ENCODE measurements at regions of chr19 and their contacts with region 1.

Region 1: DNA sequence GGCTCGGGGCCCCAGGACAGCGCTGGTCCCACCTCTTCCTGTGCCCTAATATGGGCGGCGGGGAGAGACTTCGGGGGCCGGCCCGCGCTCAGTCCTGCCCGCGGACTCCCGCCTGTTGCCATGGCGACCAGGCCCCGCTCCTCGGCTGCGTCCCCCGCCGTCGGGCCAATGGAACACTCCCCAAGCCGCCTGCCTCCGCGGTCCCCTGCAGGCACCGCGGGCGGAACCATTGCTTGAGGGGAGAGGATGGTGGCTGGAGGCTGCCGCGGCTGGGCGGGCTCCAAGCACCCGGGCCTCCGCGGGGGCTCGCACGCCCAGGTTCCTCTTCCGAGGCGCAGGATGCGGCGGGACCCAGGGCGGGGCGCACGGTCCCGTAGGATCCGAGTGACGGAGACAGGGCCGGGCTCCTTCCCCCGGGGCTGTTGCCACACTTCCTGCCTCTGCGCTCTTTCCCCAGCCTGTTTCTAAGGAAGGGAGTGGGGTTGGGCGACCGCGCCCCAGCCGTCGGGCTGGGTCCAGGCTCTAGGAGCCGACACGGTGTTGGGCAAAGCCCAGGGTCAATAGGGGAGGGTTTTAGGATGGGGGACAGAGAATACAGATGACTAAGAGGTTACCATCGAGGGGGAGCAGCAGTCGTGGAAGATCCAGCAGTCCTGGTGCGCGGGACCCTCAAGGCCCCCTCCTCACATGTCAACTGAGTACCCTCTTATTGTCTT is 1.2 kb upstream of the JUNB start:
- DNase-seq: peak; percentile 93
- H3K27ac ChIP-seq: peak overlapping the region; percentile 100
- CTCF ChIP-seq: no peak

Region 2: GRCh38 chr19:12564016-12564664 is 225.9 kb before region 1 on chr19:
- CTCF ChIA-PET with region 1: no interaction called
- POLR2A ChIA-PET with region 1: no interaction called
- DNase-seq: peak; percentile 77
- H3K27ac ChIP-seq: no peak overlapping the region
- CTCF ChIP-seq: peak; percentile 83

Region 3: DNA sequence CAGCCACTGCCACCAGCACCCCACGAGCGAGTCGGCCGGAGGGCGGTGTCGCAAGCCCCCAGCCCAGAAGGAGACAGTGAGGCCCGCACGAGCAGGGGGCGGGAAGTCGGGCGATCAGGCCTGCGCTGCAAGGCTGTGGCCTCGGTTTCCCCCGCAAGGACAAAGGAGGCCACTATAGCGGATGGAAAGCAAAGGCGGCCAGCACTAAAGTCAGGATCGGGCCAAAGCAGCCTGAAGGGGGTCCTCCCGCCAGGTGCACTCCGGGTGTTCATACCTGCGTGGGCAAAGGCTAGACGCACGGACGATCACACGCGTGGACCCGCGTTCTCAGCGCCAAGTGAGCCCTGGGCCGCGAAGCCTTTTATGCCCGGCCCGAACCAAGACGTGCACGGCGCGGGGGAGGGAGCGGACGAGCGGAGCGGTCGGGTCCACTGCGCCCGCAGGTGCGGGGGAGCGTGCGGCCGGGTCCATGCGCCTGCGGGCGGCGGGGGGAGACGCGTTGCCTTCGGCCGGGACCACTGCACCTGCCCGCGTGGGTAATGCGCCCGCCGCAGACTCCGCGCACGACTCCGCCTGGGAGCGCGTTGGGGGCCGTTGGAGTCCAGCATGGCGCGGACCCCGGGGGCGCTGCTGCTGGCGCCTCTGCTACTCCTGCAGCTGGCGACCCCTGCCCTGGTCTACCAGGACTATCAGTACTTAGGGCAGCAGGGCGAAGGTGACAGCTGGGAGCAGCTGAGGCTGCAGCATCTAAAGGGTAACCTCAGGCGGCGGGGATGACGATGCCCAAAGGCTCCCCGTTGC is 11.6 kb after region 1 on chr19 and contains the starts of genes PRDX2 and THSD8:
- CTCF ChIA-PET with region 1: no interaction called
- POLR2A ChIA-PET with region 1: no interaction called
- DNase-seq: peak; percentile 79
- H3K27ac ChIP-seq: peak within 1 kb of the TSS; percentile 100
- CTCF ChIP-seq: no peak

Region 4: GRCh38 chr19:12872941-12873890 is 83.2 kb after region 1 on chr19:
- CTCF ChIA-PET with region 1: no interaction called
- POLR2A ChIA-PET with region 1: interaction called, 11 read pairs
- DNase-seq: peak; percentile 94
- H3K27ac ChIP-seq: peak overlapping the region; percentile 56
- CTCF ChIP-seq: peak; percentile 21; the same call in 1 of the 2 replicates

Measured in RWPE1 (cell line).